ENCODE measurements at regions of chr17 and their contacts with region 1.

Region 1: DNA sequence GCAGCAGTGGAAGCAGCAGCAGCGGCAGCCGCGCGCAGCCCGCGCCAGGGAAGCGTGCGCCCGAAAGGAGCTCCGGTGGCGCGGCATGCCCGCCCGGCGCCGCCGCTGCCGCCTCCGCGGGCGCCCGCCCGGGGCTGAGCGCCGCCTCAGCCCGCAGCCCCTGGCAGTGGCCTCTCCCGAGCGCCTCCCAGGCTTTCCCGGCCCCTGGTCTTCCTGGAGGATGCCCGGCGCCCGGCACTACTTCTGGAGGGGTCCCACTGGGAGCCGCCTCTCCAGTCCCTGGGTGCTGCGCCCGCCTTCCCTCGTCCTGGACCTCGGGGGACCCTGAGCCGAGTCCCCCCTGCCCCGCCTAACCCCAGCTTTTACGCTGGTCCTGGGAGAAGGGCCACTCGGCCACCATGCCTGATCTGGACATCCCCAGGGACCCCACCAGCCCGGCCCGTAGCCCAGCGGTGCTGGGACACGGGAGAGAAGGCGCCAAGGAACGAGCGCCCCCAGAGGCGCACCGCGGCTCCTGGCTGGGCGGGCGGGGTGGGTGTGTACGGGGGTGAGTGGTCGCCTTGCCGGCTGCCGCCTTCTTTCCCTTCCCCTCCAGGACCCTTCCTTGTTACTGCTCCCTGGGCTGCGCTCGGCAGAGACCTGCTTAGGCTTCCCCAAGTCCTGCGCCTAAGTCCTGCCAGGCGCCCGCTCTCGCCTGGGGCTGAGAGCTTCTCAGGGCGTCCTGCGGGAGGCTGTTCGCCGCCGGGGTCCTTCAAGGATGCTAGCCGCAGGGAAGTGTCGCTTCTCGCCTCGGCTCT is 713 bp downstream of the ASIC2 start:
- DNase-seq: peak in 8 of 10 donors; percentile 12 to 88 (median 36)

Region 2: GRCh38 chr17:33038740-33039139 is 253.6 kb before region 1 on chr17:
- intact Hi-C with region 1: loop called (anchors 5 kb)
- DNase-seq: peak in 7 of 10 donors; percentile 28 to 95 (median 59)

Region 3: DNA sequence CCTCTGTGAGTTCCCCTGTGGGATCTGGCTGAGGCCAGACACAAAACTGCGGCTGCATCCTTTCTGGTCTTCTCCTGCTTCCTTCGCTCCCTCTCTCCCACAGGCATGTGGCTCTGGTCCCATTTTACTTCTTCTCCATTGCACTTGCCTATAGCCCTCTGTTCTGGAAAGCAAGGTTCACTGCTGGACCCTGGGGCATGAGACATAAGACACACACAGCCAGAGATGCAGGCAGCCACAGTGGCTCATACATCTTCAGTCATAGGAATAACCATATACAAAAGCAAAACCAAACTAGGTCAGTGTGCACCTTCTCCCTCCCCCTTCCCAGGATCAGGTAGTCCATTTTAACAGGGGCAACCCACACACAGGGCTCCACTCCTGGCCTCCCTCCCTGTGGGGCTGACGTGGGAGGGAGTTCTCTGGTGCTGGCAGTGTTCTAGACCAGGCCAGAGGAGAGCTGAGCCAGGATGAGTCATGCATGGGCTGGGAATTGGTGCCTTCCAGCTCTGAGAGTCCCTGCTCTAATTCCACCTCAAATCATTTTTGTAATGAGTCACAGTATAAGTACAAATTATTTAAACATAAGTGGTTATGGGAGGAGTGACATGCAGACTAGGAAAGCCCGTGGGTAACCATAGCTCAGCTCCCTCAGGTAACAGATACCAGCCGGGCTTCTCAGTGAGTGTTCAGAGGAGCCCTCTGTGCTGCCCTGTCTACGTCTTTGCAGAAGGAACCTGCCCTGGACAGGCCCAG is 57.3 kb before region 1 on chr17:
- intact Hi-C with region 1: loop called (anchors 10 kb)
- DNase-seq: peak; percentile 17 to 94 (median 58)

Region 4: GRCh38 chr17:33520426-33521330 is 228.3 kb after region 1 on chr17:
- intact Hi-C with region 1: loop called (anchors 10 kb)
- DNase-seq: peak; percentile 21 to 89 (median 60)

Region 5: DNA sequence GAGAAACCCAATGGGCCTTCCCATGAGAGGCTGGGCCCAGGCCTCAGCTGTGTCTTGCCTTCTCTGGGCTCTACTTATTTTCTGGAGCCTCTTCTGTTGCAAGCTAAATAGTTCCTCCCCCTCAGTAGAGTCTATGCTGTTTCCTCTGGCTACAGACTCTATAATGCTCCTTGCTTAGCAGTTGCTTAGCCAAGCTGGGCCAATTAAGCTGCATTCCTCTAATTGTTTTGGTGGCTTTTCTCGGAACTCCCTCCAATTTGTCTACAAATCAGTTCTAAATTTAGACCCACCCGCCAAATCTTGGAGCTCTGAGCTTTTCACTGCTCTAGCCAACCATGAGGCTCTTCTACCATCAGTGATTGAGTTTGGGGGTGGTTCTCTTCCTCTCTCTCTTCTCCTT is 303.4 kb after region 1 on chr17:
- intact Hi-C with region 1: no loop called
- DNase-seq: peak in 1 of 10 donors; percentile 9

Region 6: DNA sequence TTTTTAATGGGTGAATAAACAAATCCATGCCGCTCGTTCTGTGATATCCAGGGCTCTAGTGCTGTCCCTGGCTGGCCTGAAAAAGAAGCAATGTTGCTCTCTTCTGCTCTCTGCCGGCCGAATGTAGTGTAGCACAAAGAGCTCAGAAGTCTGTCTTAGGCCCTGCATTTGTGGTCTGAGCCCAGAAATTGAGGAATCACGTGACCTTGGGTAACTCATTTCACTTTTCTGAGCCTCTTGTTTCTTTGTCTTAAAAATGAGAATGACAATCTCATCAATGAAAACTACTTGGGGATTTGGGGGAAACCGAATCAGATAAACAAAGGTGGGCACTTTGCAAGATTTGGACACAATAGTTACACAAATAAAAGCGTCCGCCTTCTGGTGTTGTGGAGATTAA is 382.3 kb after region 1 on chr17:
- intact Hi-C with region 1: loop called (anchors 10 kb)
- DNase-seq: peak in 9 of 10 donors; percentile 43 to 95 (median 70)

Measured in posterior cingulate gyrus (tissue), 11 donors.